B cell (primary cell): ENCODE measurements at regions of chr11 and their contacts with region 1.

Region 1: DNA sequence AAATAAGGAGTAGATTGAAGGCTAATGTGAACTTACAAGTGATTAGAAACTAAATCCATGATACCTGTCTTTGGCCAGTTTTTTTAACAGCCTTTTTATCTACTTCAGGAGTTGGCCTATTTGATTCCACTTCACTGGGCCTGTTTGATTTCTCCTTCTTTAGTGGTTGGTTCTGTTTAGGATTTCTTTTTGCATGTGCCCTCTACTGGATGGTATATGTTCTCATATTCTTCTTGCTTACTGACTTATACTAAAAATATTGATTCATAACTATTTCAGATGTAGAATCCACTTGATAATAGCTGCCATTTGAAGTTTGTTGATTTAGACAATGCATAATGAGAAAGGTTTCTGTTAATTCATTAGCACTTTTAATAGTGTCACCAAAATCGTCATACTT is 53.9 kb downstream of the USP47 start:
- DNase-seq: no peak
- ATAC-seq: no peak
- H3K4me3 ChIP-seq: no peak overlapping the region
- H3K4me3 Mint-ChIP-seq: no peak overlapping the region
- H3K27ac ChIP-seq: no peak overlapping the region
- H3K27ac Mint-ChIP-seq: no peak overlapping the region
- H3K4me1 ChIP-seq: no peaks in the 10 kb centered on the region
- H3K4me1 Mint-ChIP-seq: no peaks in the 10 kb centered on the region
- H3K27me3 ChIP-seq: no peaks in the 10 kb centered on the region
- H3K27me3 Mint-ChIP-seq: no peaks in the 10 kb centered on the region
- CTCF ChIP-seq: no peak

Region 2: GRCh38 chr11:11856638-11857037 is 39.0 kb before region 1 on chr11:
- CTCF ChIA-PET with region 1: no interaction called
- POLR2A ChIA-PET with region 1: no interaction called
- intact Hi-C with region 1: no loop called
- DNase-seq: no peak
- ATAC-seq: no peak
- H3K4me3 ChIP-seq: no peak overlapping the region
- H3K4me3 Mint-ChIP-seq: peak overlapping the region; percentile 26
- H3K27ac ChIP-seq: peak overlapping the region in 1 of 2 donors; percentile 46
- H3K27ac Mint-ChIP-seq: no peak overlapping the region
- H3K4me1 ChIP-seq: peaks cover 8 to 31% of the 10 kb centered on the region in 2 donors
- H3K4me1 Mint-ChIP-seq: peaks cover 58% of the 10 kb centered on the region
- H3K27me3 ChIP-seq: no peaks in the 10 kb centered on the region
- H3K27me3 Mint-ChIP-seq: no peaks in the 10 kb centered on the region
- CTCF ChIP-seq: no peak

Region 3: GRCh38 chr11:11909727-11910126 is 14.1 kb after region 1 on chr11:
- CTCF ChIA-PET with region 1: no interaction called
- POLR2A ChIA-PET with region 1: no interaction called
- intact Hi-C with region 1: no loop called
- DNase-seq: no peak
- ATAC-seq: no peak
- H3K4me3 ChIP-seq: no peak overlapping the region
- H3K4me3 Mint-ChIP-seq: no peak overlapping the region
- H3K27ac ChIP-seq: no peak overlapping the region
- H3K27ac Mint-ChIP-seq: no peak overlapping the region
- H3K4me1 ChIP-seq: no peaks in the 10 kb centered on the region
- H3K4me1 Mint-ChIP-seq: no peaks in the 10 kb centered on the region
- H3K27me3 ChIP-seq: no peaks in the 10 kb centered on the region
- H3K27me3 Mint-ChIP-seq: no peaks in the 10 kb centered on the region
- CTCF ChIP-seq: no peak

Region 4: DNA sequence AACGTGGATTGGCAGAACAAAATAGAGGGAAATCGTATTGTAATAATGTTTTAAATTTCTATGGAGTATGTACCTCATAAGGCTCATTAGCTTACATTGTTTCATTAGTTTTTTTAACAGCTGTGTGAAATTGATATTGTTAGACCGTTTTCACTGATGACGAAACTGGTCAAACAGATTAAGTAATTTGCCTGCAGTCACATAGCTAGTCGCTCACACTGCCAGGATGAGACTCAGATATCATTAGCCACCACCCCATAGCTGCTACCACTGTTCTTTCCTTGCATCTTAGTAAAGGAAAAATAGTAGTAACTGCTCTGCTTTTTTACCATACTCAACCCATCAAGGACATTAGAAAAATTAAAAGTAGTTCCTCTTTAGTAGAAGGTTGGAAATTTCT is 48.8 kb after region 1 on chr11:
- CTCF ChIA-PET with region 1: no interaction called
- POLR2A ChIA-PET with region 1: no interaction called
- intact Hi-C with region 1: loop called (anchors 5 kb)
- DNase-seq: no peak
- ATAC-seq: no peak
- H3K4me3 ChIP-seq: no peak overlapping the region
- H3K4me3 Mint-ChIP-seq: no peak overlapping the region
- H3K27ac ChIP-seq: no peak overlapping the region
- H3K27ac Mint-ChIP-seq: no peak overlapping the region
- H3K4me1 ChIP-seq: no peaks in the 10 kb centered on the region
- H3K4me1 Mint-ChIP-seq: no peaks in the 10 kb centered on the region
- H3K27me3 ChIP-seq: no peaks in the 10 kb centered on the region
- H3K27me3 Mint-ChIP-seq: no peaks in the 10 kb centered on the region
- CTCF ChIP-seq: no peak